ENCODE measurements at regions of chr14 and their contacts with region 1.

Region 1: DNA sequence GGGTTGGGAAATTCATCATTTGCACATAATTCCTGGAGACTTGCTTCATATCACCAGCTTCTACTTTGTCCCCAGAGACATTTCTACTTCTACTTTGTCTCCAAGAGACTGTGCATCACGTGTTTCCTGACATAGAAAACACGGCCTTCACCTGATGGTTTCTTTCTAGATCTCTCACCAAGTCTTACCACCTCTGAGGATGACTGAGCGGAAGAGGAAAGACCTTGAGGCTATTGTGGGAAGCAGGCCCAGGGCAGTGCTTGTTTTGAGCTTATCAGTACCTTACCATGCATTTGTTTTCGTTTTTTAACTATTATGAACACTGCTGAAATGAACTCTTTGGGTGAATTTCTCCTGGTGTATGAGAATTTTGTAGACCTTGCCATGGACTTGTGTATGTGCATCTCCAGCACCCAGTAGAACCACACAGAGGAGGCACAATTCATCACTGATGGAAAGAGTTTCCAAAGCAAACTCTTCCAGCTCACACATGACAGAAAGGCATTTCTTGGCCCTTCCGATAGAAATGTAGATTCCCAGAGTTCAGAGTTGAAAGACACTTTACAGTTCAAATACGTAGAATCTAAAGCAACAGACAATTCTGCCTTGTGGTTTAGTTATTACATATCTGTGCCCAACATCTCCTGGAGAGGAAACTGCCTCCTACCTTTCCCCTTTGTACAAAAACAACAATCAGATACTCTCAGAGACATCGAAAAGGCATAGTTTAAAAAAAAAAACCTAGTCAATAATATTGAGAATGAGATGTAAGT is 434.7 kb downstream of the FUT8 start:
- DNase-seq: peak; percentile 95
- H3K4me3 Mint-ChIP-seq: peak overlapping the region; percentile 71
- H3K27ac Mint-ChIP-seq: peak overlapping the region; percentile 87
- H3K4me1 Mint-ChIP-seq: peaks cover 67% of the 10 kb centered on the region
- H3K27me3 Mint-ChIP-seq: no peaks in the 10 kb centered on the region

Region 2: DNA sequence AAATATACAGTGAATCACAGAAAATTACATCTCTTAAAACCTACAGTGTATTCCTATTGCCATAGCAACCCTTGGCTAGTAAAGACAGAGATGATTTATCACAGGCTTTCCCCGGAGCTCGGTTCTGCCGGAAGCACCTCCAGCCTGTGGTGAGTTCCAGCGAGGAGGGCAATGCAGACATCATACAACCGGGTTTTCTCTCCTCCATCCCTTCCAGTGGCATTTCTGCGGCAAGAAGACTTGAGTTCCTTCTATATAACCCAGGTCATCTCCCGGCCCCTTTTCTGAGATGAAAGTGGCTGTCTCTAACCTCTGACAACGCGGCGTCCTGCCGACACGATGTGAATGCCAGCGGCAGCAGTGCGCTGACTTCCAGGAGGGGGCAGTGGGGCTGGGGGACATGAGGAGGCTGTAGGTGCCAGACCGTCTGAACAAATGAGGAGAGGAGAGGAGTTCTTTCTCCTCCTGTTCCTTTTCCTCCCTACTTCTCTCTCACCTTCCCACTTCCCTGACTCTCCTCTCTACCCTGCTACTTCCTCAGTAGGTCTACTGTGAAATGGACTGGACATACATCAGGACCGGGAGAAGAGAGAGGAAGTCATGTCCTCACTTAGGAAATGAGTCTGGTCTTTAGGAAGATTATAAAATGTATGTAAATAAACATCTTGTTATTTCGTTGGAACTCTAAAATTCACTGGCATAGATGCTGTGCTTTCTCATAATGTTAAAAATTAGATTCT is 676.3 kb before region 1 on chr14:
- intact Hi-C with region 1: loop called (anchors 5 kb)
- DNase-seq: peak; percentile 88
- H3K4me3 Mint-ChIP-seq: peak overlapping the region; percentile 78
- H3K27ac Mint-ChIP-seq: peak overlapping the region; percentile 82
- H3K4me1 Mint-ChIP-seq: peaks cover 36% of the 10 kb centered on the region
- H3K27me3 Mint-ChIP-seq: peaks cover 3% of the 10 kb centered on the region

Region 3: GRCh38 chr14:65879248-65880009 is 32.2 kb after region 1 on chr14:
- intact Hi-C with region 1: loop called (anchors 1 kb)
- DNase-seq: peak; percentile 64
- H3K4me3 Mint-ChIP-seq: peak overlapping the region; percentile 4
- H3K27ac Mint-ChIP-seq: peak overlapping the region; percentile 68
- H3K4me1 Mint-ChIP-seq: peaks cover 29% of the 10 kb centered on the region
- H3K27me3 Mint-ChIP-seq: no peaks in the 10 kb centered on the region

Region 4: DNA sequence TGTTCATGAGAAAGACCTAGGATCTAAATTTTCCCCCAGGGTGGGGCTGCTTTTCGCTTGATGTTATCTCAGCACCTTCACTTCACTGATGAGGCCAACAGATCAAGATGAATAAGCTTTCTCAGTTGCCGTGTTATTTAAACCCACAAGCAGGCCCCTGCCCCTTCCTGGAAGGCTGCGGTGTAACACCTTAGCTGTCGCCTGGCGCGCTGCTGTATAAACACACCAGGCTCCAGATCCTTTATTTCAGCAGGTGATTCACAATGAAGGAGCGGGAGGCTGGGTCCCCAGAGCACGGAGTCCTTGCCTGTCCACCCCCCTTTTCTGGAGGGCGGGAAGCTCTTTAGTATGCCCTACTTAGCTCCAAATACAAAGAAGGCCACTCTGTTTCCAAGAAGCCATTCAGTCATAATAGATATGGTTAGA is 80.7 kb after region 1 on chr14:
- intact Hi-C with region 1: loop called (anchors 1 kb)
- DNase-seq: peak; percentile 95
- H3K4me3 Mint-ChIP-seq: peak overlapping the region; percentile 58
- H3K27ac Mint-ChIP-seq: peak overlapping the region; percentile 91
- H3K4me1 Mint-ChIP-seq: peaks cover 60% of the 10 kb centered on the region
- H3K27me3 Mint-ChIP-seq: no peaks in the 10 kb centered on the region

Region 5: GRCh38 chr14:65949711-65950516 is 102.7 kb after region 1 on chr14:
- intact Hi-C with region 1: loop called (anchors 1 kb)
- DNase-seq: peak; percentile 71
- H3K4me3 Mint-ChIP-seq: peak overlapping the region; percentile 14
- H3K27ac Mint-ChIP-seq: peak overlapping the region; percentile 82
- H3K4me1 Mint-ChIP-seq: peaks cover 40% of the 10 kb centered on the region
- H3K27me3 Mint-ChIP-seq: peaks cover 9% of the 10 kb centered on the region

Measured in activated CD4-positive, alpha-beta T cell treated with anti-CD3 and anti-CD28 coated beads, Interleukin-2, amount 10 ng/mL, durations not matched to agents 24 days and 14 days (primary cell).